ENCODE measurements at regions of chr3 and their contacts with region 1.

Region 1: DNA sequence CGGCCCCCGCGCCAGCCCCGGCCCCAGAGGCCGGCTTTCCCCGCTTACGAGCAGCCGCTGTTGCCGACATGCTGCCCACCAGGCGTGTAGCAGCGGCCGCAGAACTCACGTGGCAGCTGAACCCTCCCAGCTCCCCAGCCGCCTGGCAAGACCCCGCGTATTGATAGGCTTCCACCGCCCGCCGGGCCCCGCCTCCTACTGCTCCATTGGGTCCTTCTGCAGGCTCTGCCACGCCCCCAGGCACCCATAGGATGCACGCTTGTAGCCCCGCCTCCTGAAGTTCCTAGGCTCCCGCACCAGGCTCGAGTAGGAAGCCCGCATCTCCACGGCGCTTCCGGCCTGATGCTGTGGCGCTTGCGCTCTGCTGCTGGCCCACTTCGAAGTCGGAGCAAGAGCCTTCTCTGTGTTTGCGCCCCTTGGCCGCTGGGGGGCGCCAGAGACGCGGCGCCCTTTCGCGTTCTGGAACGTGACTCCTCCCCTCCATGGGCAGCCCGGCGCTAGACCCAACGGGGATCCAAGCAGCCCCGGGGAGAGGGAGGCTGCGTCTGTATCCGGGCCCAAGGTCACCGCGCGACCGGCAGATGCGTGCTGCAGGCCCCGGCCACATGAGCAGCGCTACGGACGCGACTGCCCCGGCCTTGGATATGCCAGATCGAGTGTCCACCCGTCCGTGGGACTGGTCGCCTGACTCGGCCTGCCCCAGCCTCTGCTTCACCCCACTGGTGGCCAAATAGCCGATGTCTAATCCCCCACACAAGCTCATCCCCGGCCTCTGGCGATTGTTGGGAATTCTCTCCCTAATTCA is at the starts of genes PARP3 and RRP9:
- DNase-seq: peak; percentile 100
- ATAC-seq: peak; percentile 96
- total RNA-seq, gene PARP3: 17.6 TPM
- total RNA-seq, gene RRP9: 7.7 TPM

Region 2: GRCh38 chr3:51974963-51975851 is 33.2 kb after region 1 on chr3 and contains the start of gene ABHD14A:
- intact Hi-C with region 1: loop called (anchors 1 kb)
- DNase-seq: peak; percentile 89
- ATAC-seq: peak; percentile 82
- total RNA-seq, gene ABHD14A: 31.5 TPM

Region 3: DNA sequence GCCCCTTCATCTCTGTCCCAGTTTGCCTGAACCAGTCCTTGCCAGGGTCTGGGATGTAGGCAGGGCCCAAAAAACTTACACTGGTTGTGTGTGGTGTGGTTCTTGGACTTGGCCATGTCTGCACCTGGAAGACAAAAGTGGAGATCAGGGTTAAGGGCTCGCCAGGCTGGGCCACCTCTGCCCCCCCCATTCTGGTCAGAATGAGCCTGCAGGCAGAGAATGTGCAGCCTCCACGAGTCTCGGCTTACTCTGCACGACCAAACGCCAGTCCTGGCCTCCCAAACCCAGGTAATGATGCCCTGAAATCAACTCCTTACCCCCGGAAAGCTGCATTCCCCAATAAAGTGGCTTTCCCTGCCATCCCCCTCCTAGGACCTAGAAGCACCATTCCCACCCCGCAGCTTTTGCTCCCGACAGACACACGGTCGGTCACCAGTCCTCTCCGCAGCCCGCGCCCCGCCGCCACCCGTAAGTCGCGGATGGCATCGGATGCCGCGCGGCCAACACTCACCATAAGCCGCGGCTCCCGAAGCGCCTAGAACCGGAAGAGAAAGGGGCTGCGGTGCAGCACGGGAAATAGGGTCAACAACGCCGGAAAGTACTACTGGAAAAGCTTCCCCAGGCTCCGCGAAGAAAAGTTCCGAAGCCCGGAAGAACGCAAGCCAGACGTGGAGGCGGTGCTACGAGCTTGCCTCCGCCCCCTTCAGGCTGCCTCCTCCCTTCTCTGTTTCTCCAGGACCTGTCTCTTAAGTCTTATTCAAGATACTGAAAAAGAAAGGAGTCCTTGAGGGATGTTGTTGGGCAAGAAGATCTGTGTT is 53.6 kb after region 1 on chr3 and contains the start of gene RPL29:
- intact Hi-C with region 1: loop called (anchors 1 kb)
- DNase-seq: peak; percentile 92
- ATAC-seq: peak; percentile 95
- total RNA-seq, gene RPL29: 677 TPM

Region 4: DNA sequence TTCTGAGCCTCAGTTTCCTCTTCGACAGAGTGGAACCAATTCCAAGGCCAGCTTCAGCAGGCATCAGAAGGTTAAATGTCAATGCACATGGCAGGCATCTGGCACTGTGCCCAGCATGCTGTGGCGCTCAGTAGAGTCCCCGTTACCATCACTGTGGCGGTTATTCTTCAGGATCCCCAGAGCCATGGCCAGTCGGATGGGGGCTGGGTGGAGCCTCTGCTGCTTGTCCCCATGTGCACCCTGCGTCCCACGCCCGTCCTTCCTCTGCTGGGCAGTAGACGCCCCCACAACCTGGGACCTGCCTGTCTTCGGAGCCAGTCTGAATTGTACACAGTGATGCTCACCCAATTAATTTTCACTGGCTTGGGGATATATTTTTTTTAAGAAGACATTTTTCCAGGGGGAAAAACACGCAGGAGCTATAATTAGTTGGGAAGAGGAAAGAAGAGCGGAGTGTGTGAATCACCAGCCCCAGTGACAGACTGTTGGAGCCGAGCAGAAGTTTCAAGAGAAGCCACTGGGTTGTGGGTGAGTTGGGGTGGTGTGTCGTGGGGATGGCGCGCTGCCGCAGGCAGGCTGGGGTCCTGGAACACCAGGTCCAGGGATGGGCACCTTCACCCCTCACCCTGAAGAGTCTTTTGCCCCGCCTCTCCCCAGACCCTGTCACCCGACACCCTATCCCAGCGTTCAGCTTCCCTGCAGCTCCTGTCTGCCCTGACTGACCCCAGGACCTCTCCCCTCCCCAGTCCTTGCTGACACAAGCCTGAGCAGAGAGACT is 80.5 kb after region 1 on chr3:
- intact Hi-C with region 1: no loop called
- DNase-seq: no peak
- ATAC-seq: peak; percentile 25

Region 5: DNA sequence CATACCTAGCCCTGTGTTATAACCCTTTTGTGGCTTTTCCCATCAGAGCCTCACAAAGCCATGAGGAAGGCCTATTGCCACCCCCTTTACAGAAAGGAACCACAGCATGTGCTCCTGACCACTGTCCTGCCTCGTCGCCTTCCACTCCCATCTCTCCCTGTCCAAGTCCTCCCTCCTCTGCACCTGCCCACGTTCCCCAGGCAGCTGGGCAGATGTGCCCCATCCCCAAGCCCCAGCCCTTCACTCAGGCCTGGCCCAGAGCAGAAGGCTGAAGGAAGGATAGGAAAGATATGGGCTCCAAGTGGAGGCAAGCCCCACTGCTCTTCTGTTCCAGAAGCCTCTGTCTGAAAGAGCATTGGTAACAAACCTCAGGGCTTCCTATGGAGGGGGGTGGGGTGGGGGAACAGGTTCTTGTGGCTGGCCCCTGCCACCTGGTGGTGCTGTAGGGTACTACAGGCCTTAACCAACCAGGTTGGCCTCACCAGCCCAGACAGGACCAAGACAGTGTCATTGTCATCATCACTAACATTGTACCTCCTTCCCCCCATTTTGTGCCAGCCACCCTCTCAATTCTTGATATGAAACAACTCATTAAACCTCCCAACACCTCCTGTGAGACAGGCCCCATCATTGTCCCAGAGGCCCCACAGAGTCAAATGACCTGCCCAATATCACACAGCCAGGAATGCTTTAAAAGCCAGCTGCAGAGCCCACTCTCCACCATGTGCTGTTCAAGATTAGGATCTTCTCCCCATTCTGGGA is 202.2 kb after region 1 on chr3:
- intact Hi-C with region 1: loop called (anchors 5 kb)
- DNase-seq: peak; percentile 88
- ATAC-seq: peak; percentile 83